Endothelial cell of umbilical vein (primary cell): ENCODE measurements at regions of chr4 and their contacts with region 1.

Region 1: GRCh38 chr4:38759113-38759789 is 23.5 kb downstream of the TLR10 start:
- DNase-seq: peak; percentile 64
- H3K4me3 ChIP-seq: no peak overlapping the region
- H3K27ac ChIP-seq: no peak overlapping the region
- H3K4me1 ChIP-seq: no peaks in the 10 kb centered on the region
- H3K27me3 ChIP-seq: peaks cover 0 to 3% of the 10 kb centered on the region in 2 experiments
- CTCF ChIP-seq: peak; percentile 47 to 64
- POLR2A ChIP-seq: no peak

Region 2: GRCh38 chr4:38782452-38783108 is 23.3 kb after region 1 on chr4 and contains the start of gene TLR10:
- CTCF ChIA-PET with region 1: interaction called, 89 read pairs
- POLR2A ChIA-PET with region 1: no interaction called
- dilution Hi-C with region 1: no loop called
- intact Hi-C with region 1: no loop called
- DNase-seq: peak; percentile 56
- H3K4me3 ChIP-seq: no peak within 1 kb of the TSS
- H3K27ac ChIP-seq: no peak within 1 kb of the TSS
- H3K4me1 ChIP-seq: no peaks in the 10 kb centered on the region
- H3K27me3 ChIP-seq: peaks cover 0 to 2% of the 10 kb centered on the region in 2 experiments
- CTCF ChIP-seq: peak; percentile 38 to 55
- POLR2A ChIP-seq: no peak
- total RNA-seq, gene TLR10: not detected in 2 replicates

Region 3: DNA sequence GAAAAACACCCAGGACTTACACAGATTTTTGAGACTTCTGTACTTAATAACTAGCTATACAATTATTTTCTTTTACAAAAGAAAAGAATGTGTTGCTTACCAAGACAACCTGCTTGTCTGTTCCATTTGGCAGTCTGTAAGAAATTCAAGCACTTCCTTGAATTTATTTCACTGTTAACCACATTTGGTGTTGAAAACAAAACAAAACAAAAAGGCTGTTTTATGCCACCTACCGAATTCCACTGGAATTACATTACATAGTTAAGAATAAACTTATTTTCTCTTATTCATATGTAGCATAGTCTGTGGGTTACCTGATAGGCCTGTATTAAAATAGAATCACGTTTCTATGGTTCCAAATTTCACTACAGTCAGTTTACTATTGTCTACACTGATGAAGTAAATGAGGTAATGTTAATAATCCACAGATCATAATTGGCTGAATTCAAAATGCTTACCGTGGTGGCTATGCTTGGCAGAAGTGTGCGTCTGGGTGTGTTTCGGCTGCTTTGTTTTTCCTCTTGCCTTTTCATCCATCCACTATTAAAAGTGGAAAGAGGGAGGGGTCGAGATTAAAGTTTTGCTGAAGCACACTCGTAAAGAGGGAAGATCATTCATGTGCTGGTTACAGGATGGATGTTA is 45.5 kb after region 1 on chr4 and contains the start of gene TLR1:
- CTCF ChIA-PET with region 1: interaction called, 23 read pairs
- POLR2A ChIA-PET with region 1: no interaction called
- dilution Hi-C with region 1: no loop called
- intact Hi-C with region 1: loop called (anchors 1 kb)
- DNase-seq: peak; percentile 89
- H3K4me3 ChIP-seq: peak within 1 kb of the TSS in 2 of 3 experiments; percentile 11 to 54
- H3K27ac ChIP-seq: peak within 1 kb of the TSS; percentile 30
- H3K4me1 ChIP-seq: peaks cover 19% of the 10 kb centered on the region
- H3K27me3 ChIP-seq: no peaks in the 10 kb centered on the region
- CTCF ChIP-seq: peak; percentile 15 to 36
- POLR2A ChIP-seq: no peak
- total RNA-seq, gene TLR1: 2.7 and 4.6 TPM in 2 replicates

Region 4: DNA sequence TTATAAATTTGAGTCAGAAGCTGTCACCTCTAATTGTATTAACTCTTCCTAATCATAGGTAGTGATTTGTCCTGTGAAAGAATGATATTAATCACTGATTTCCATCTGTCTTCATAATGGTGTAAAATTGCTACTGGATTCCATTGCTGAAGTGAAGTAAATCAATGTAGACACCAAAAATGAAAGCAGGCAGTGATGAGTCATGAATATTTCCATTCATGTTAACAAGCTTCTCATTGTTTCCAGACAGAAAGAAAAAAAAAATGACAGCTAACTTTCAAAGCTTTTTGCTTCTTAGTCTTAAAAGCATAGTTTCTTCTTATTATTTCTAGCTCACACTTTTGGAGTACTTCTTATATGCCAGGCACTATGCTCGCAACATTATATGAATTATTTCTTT is 129.9 kb after region 1 on chr4:
- CTCF ChIA-PET with region 1: interaction called, 33 read pairs
- POLR2A ChIA-PET with region 1: no interaction called
- dilution Hi-C with region 1: no loop called
- intact Hi-C with region 1: no loop called
- DNase-seq: peak; percentile 89
- H3K4me3 ChIP-seq: peak overlapping the region in 1 of 3 experiments; percentile 32
- H3K27ac ChIP-seq: peak overlapping the region; percentile 90
- H3K4me1 ChIP-seq: peaks cover 21% of the 10 kb centered on the region
- H3K27me3 ChIP-seq: no peaks in the 10 kb centered on the region
- CTCF ChIP-seq: no peak
- POLR2A ChIP-seq: no peak

Region 5: DNA sequence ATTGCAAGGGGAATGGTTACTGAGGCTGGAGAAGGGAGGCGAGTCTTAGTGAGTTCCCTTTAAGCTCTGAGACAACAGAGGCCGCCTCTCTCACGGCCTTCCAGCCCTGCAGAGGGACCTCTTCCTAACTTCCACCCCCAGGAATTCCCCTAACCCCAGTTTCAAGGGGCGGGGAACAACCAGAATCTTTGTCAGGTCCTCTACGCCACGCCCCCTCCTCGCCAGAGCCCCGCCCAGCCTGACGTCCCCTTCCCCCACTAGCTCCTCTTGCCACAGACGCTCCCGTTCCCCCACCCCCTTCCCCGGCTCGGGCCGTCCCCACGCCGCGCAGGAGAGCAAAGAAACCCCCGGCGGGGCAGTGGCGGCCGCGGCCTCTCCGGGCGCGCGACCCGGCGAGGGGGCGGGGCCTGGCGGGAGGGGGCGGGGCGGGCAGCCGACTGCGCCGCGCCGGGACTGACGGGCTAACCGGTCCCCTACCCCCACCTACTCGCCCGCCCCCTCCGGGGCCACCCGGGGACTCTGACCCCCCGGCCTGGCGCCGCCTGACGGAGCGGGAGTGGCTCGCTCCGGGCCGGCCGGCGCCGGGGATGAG is 285.2 kb after region 1 on chr4:
- CTCF ChIA-PET with region 1: no interaction called
- POLR2A ChIA-PET with region 1: no interaction called
- dilution Hi-C with region 1: no loop called
- intact Hi-C with region 1: loop called (anchors 10 kb)
- DNase-seq: peak; percentile 94
- H3K4me3 ChIP-seq: peak overlapping the region; percentile 60 to 98 (median 95)
- H3K27ac ChIP-seq: peak overlapping the region; percentile 92
- H3K4me1 ChIP-seq: peaks cover 25% of the 10 kb centered on the region
- H3K27me3 ChIP-seq: no peaks in the 10 kb centered on the region
- CTCF ChIP-seq: no peak
- POLR2A ChIP-seq: peak; percentile 81

Region 6: DNA sequence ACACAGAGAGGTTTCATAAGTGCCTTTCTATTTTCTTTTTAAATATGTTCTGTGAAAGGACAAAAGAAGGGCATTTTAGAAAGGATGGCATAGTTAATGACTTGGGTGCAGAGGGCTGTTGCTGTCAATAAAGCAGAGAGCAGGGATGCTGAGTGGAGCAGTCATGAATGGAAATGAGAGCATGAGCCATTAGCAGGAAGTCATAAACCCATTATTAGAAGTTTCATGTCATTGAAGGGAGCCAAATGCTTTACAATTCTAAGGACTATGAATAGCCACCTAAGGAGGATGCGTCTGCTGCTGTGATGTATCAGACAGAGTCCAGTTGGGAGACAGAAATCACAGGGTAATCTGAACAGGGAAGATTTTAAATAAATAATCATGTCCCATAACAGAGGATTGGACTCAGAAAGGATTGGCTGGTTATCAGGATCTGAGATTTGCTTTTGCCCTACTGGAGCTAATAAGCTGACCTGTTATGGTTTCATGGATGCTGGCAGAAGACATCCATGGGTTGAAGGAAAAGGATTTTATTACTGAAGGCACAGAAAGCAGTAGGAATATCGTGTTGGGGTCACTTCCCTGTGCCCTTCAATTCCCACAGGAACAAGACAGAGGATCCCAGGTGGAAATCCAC is 375.6 kb after region 1 on chr4:
- CTCF ChIA-PET with region 1: interaction called, 32 read pairs
- POLR2A ChIA-PET with region 1: no interaction called
- dilution Hi-C with region 1: no loop called
- intact Hi-C with region 1: loop called (anchors 1 kb)
- DNase-seq: peak; percentile 16
- H3K4me3 ChIP-seq: no peak overlapping the region
- H3K27ac ChIP-seq: no peak overlapping the region
- H3K4me1 ChIP-seq: no peaks in the 10 kb centered on the region
- H3K27me3 ChIP-seq: no peaks in the 10 kb centered on the region
- CTCF ChIP-seq: no peak
- POLR2A ChIP-seq: no peak